Adrenal gland (tissue), 19 donors: ENCODE measurements at regions of chr10 and their contacts with region 1.

Region 1: GRCh38 chr10:57657164-57657765 is 610.4 kb downstream of the IPMK start:
- DNase-seq: peak; percentile 23 to 82 (median 52)
- H3K4me3 ChIP-seq: no peak overlapping the region
- H3K27ac ChIP-seq: no peak overlapping the region
- H3K4me1 ChIP-seq: no peaks in the 10 kb centered on the region
- H3K27me3 ChIP-seq: no peaks in the 10 kb centered on the region
- CTCF ChIP-seq: peak; percentile 57 to 75 (median 70)
- POLR2A ChIP-seq: no peak

Region 2: DNA sequence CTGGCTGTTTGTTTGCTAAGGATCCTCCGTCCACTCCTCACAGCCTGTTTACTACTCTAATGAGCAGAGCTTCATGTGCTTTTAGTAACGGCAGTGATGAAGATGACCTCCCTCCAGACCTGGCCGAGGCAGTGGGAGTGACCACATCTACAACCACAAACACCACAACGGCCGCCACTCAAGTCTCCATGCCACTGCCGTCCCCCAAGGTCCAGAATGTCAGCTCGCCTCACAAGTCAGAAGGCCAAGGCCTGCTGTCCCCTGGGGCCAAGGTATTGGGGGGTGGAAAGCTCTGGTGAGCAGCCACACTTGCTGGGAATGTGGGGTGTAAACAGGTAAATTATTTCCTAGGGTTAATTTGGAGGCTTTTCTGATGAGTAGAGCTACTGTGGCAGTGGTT is 316.0 kb before region 1 on chr10:
- intact Hi-C with region 1: loop called in 1 of 2 experiments (anchors 10 kb)
- DNase-seq: no peak
- H3K4me3 ChIP-seq: no peak overlapping the region
- H3K27ac ChIP-seq: no peak overlapping the region
- H3K4me1 ChIP-seq: no peaks in the 10 kb centered on the region
- H3K27me3 ChIP-seq: no peaks in the 10 kb centered on the region
- CTCF ChIP-seq: no peak
- POLR2A ChIP-seq: no peak

Region 3: GRCh38 chr10:57420881-57421280 is 236.4 kb before region 1 on chr10:
- intact Hi-C with region 1: no loop called
- DNase-seq: no peak
- H3K4me3 ChIP-seq: no peak overlapping the region
- H3K27ac ChIP-seq: no peak overlapping the region
- H3K4me1 ChIP-seq: no peaks in the 10 kb centered on the region
- H3K27me3 ChIP-seq: no peaks in the 10 kb centered on the region
- CTCF ChIP-seq: no peak
- POLR2A ChIP-seq: no peak

Region 4: DNA sequence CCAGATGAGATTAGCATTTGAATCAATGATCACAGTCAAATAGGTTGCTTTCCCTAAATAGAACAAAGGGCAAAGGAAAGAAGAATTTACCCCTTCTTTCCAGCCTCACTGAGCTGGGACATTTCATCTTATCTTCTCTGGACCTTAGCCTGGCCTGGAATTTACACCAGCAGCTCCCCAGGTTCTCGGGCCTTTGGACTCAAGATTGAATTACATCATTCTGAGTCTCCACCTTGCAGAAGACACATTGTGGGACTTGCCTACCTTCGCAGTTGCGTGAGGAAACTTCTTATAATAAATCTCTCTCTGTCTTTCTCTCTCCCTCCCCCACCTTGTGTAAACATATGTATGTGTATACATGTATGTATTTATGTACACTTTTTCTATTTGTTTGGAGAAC is 122.0 kb before region 1 on chr10:
- intact Hi-C with region 1: no loop called
- DNase-seq: no peak
- H3K4me3 ChIP-seq: no peak overlapping the region
- H3K27ac ChIP-seq: no peak overlapping the region
- H3K4me1 ChIP-seq: no peaks in the 10 kb centered on the region
- H3K27me3 ChIP-seq: no peaks in the 10 kb centered on the region
- CTCF ChIP-seq: no peak
- POLR2A ChIP-seq: no peak